ENCODE measurements at regions of chr12 and their contacts with region 1.

Region 1: GRCh38 chr12:107105410-107105703 is 12.0 kb upstream of the CRY1 start:
- DNase-seq: no peak
- H3K4me3 ChIP-seq: no peak overlapping the region
- H3K27ac ChIP-seq: no peak overlapping the region
- H3K4me1 ChIP-seq: peaks cover 3% of the 10 kb centered on the region
- H3K27me3 ChIP-seq: peaks cover 12 to 19% of the 10 kb centered on the region in 2 experiments
- CTCF ChIP-seq: no peak
- POLR2A ChIP-seq: no peak

Region 2: GRCh38 chr12:106386813-106387535 is 718.4 kb before region 1 on chr12:
- CTCF ChIA-PET with region 1: interaction called, 12 read pairs
- POLR2A ChIA-PET with region 1: no interaction called
- dilution Hi-C with region 1: no loop called
- intact Hi-C with region 1: no loop called
- DNase-seq: no peak
- H3K4me3 ChIP-seq: no peak overlapping the region
- H3K27ac ChIP-seq: no peak overlapping the region
- H3K4me1 ChIP-seq: no peaks in the 10 kb centered on the region
- H3K27me3 ChIP-seq: no peaks in the 10 kb centered on the region
- CTCF ChIP-seq: no peak
- POLR2A ChIP-seq: no peak

Region 3: GRCh38 chr12:107079172-107080011 is 26.0 kb before region 1 on chr12:
- CTCF ChIA-PET with region 1: interaction called, 6 read pairs
- POLR2A ChIA-PET with region 1: no interaction called
- dilution Hi-C with region 1: no loop called
- intact Hi-C with region 1: loop called (anchors 1 kb)
- DNase-seq: peak; percentile 53
- H3K4me3 ChIP-seq: no peak overlapping the region
- H3K27ac ChIP-seq: no peak overlapping the region
- H3K4me1 ChIP-seq: no peaks in the 10 kb centered on the region
- H3K27me3 ChIP-seq: no peaks in the 10 kb centered on the region
- CTCF ChIP-seq: peak; percentile 38 to 41
- POLR2A ChIP-seq: no peak